ENCODE measurements at regions of chr19 and their contacts with region 1.

Region 1: DNA sequence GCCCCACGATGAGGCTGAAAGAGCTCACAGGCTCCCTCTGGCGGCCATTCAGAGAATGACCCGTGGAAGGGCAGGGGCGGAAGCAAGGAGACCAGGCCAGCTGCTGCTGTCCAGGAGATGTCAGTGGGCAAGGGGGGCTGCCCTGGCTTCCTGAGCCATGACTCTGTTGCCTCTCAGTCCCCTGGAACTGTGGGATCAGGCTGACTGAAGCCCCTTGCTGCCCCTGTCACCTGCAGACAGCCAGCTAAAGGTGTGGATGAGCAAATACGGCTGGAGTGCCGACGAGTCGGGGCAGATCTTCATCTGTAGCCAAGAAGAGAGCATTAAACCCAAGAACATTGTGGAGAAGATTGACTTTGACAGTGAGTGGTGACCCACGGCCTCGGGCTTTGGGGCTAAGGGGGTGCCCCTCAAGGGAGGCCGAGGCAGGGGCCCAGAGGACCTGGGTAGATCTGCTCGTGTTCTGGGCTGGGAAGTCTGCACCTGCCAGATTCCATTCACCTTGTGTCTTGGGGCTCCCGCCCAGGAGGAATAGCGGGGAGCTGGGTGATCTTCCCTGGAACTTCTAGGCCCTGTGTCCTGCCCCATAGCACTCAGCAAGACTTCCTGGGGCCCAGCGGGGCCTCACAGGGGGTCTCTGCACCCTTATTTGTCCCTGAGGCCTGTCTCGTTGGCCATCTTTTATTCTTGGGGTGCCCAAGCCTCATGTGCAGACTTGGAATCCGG is 12.5 kb upstream of the ACTN4 start:
- DNase-seq: peak in 1 of 2 experiments; percentile 95
- H3K4me3 ChIP-seq: no peak overlapping the region
- H3K27ac ChIP-seq: no peak overlapping the region
- H3K4me1 ChIP-seq: no peaks in the 10 kb centered on the region; a peak in 2 of 7 replicates
- H3K27me3 ChIP-seq: no peaks in the 10 kb centered on the region
- CTCF ChIP-seq: peak; percentile 87 to 91 (median 90)
- EP300 ChIP-seq: no peak
- POLR2A ChIP-seq: no peak
- RAD21 ChIP-seq: peak; percentile 57 to 70

Region 2: DNA sequence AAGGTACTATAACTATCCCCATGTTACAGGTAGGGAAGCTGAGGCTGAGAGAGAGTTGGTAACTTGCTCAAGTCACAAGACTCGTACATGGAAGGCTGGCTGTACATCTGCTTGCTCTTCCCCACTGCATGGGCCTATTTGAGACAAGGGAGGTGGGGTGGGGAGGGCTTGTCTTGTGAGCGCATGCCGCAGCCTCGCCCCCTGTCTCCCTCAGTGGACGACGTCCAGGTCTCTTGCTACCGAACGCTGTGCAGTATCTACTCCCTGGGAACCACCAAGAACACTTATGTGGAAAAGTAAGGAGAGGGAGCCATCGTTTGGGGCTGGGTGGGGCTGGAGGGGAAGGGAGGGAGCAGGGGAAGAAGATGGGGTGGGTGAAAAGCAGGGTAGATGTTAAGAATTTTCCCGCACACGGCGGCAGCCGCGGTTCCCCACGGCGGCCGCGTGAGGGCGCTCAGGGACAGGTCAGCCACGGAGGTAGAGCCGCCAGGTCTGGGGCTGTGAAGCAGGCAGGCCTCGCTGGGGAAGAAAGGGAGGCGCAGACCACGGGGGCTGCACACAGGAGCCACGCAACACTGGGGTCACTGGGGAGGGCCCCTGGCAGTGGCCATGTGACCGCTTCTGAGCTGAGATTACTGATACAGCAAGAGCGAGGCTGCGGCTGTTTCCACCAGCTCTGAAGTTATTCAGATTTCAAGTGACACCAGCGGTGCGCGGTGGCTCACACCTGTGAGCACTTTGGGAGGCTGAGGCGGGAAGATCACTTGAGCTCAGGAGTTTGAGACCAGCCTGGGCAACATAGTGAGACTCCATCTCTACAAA is 119.9 kb before region 1 on chr19:
- CTCF ChIA-PET with region 1: interaction called, 23 read pairs
- POLR2A ChIA-PET with region 1: no interaction called
- DNase-seq: peak; percentile 44 to 95
- H3K4me3 ChIP-seq: no peak overlapping the region
- H3K27ac ChIP-seq: no peak overlapping the region
- H3K4me1 ChIP-seq: no peaks in the 10 kb centered on the region
- H3K27me3 ChIP-seq: no peaks in the 10 kb centered on the region
- CTCF ChIP-seq: peak; percentile 83 to 85 (median 85)
- EP300 ChIP-seq: no peak; a peak in 1 of 3 replicates
- POLR2A ChIP-seq: no peak
- RAD21 ChIP-seq: peak; percentile 83 to 84

Region 3: GRCh38 chr19:38596057-38596981 is 38.6 kb before region 1 on chr19:
- CTCF ChIA-PET with region 1: interaction called, 21 read pairs
- POLR2A ChIA-PET with region 1: interaction called, 3 read pairs
- DNase-seq: peak; percentile 87 to 100
- H3K4me3 ChIP-seq: peak overlapping the region; percentile 55 to 80 (median 72)
- H3K27ac ChIP-seq: peak overlapping the region; percentile 54; the same call in 1 of the 2 replicates
- H3K4me1 ChIP-seq: peaks cover 0 to 6% (median 4%) of the 10 kb centered on the region in 4 experiments; a peak in 4 of 7 replicates
- H3K27me3 ChIP-seq: no peaks in the 10 kb centered on the region
- CTCF ChIP-seq: no peak
- EP300 ChIP-seq: no peak
- POLR2A ChIP-seq: peak in 1 of 2 experiments; percentile 39; a peak in 1 of 3 replicates
- RAD21 ChIP-seq: 0 out of 4 replicates have a peak, but pooled peaks of 1 of the 2 experiments have one; percentile 6

Region 4: DNA sequence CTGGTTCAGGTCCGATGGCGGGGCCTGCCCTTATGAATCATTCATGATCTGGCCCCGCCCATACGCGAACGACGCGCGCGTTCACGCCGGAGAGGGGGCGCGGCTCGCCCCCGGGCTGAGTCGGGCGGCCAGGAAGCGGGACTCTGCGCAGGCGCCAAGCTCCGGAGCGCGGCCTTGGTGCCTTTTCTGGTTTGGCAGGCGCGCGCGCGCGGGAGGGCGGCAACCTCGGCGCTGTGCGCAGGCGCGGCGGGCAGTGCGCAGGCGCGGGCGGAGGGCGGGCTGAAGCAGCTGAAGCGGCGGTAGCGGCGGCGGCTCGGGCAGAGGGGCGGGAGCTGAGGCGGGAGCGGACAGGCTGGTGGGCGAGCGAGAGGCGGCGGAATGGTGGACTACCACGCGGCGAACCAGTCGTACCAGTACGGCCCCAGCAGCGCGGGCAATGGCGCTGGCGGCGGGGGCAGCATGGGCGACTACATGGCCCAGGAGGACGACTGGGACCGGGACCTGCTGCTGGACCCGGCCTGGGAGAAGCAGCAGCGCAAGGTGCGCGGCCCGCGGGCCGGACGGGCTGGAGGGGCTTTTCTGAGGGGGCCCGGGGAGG is 12.5 kb after region 1 on chr19 and contains the start of gene ACTN4:
- CTCF ChIA-PET with region 1: interaction called, 62 read pairs
- POLR2A ChIA-PET with region 1: interaction called, 37 read pairs
- DNase-seq: peak; percentile 93 to 100
- H3K4me3 ChIP-seq: peak within 1 kb of the TSS; percentile 91 to 98 (median 95)
- H3K27ac ChIP-seq: peak within 1 kb of the TSS; percentile 71; the same call in 1 of the 2 replicates
- H3K4me1 ChIP-seq: peaks cover 5 to 19% (median 12%) of the 10 kb centered on the region in 4 experiments
- H3K27me3 ChIP-seq: no peaks in the 10 kb centered on the region
- CTCF ChIP-seq: no peak
- EP300 ChIP-seq: no peak
- POLR2A ChIP-seq: peak; percentile 92 to 93
- RAD21 ChIP-seq: no peak
- total RNA-seq, gene ACTN4: 520 and 530 TPM in 2 replicates

Region 5: GRCh38 chr19:38693380-38694223 is 58.7 kb after region 1 on chr19:
- CTCF ChIA-PET with region 1: interaction called, 39 read pairs
- POLR2A ChIA-PET with region 1: interaction called, 9 read pairs
- DNase-seq: no peak
- H3K4me3 ChIP-seq: no peak overlapping the region
- H3K27ac ChIP-seq: peak overlapping the region; percentile 84
- H3K4me1 ChIP-seq: peaks cover 3 to 36% (median 20%) of the 10 kb centered on the region in 4 experiments
- H3K27me3 ChIP-seq: no peaks in the 10 kb centered on the region
- CTCF ChIP-seq: no peak
- EP300 ChIP-seq: peak in 1 of 2 experiments; percentile 16; a peak in 1 of 3 replicates
- POLR2A ChIP-seq: peak in 1 of 2 experiments; percentile 76; a peak in 2 of 3 replicates
- RAD21 ChIP-seq: no peak

Region 6: GRCh38 chr19:38817081-38817677 is 182.3 kb after region 1 on chr19:
- CTCF ChIA-PET with region 1: no interaction called
- POLR2A ChIA-PET with region 1: no interaction called
- DNase-seq: no peak
- H3K4me3 ChIP-seq: no peak overlapping the region
- H3K27ac ChIP-seq: no peak overlapping the region
- H3K4me1 ChIP-seq: no peaks in the 10 kb centered on the region
- H3K27me3 ChIP-seq: no peaks in the 10 kb centered on the region
- CTCF ChIP-seq: no peak
- EP300 ChIP-seq: no peak
- POLR2A ChIP-seq: no peak
- RAD21 ChIP-seq: no peak

Measured in H1 (cell line).